Activated CD4-positive, alpha-beta T cell treated with anti-CD3 and anti-CD28 coated beads, Interleukin-2, amount 10 ng/mL, durations not matched to agents 7 days and 5 days (primary cell): ENCODE measurements at regions of chr22 and their contacts with region 1.

Region 1: GRCh38 chr22:39932918-39933649 is 27.1 kb upstream of the TMA7B start:
- DNase-seq: peak; percentile 62
- H3K4me3 Mint-ChIP-seq: peak overlapping the region; percentile 67
- H3K27ac Mint-ChIP-seq: peak overlapping the region; percentile 83
- H3K4me1 Mint-ChIP-seq: peaks cover 55% of the 10 kb centered on the region
- H3K27me3 Mint-ChIP-seq: no peaks in the 10 kb centered on the region

Region 2: GRCh38 chr22:39917776-39918495 is 15.1 kb before region 1 on chr22:
- CTCF ChIA-PET with region 1: interaction called, 64 read pairs
- POLR2A ChIA-PET with region 1: no interaction called
- DNase-seq: no peak
- H3K4me3 Mint-ChIP-seq: peak overlapping the region; percentile 60
- H3K27ac Mint-ChIP-seq: peak overlapping the region; percentile 83
- H3K4me1 Mint-ChIP-seq: peaks cover 93% of the 10 kb centered on the region
- H3K27me3 Mint-ChIP-seq: no peaks in the 10 kb centered on the region

Region 3: DNA sequence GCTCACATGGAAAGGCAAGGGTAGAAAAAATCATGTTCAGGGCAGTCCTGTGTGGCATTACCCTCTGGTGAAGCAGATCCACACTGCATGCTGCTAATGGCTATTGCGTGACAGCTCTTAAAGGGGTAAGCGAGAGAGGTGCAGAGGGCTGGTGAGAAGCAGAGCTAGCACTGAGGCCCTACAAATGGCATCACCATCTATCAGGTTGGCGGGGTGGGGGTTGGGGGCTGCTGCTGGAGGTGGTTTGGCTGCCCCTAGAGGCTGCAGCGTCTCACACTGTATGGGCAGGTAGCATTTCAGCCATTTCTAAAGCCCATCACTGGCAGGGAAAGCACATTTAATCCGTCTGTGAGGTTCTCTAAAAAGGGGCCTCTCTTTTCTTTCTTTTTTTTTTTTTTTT is 10.3 kb after region 1 on chr22:
- CTCF ChIA-PET with region 1: interaction called, 15 read pairs
- POLR2A ChIA-PET with region 1: interaction called, 3 read pairs
- DNase-seq: no peak
- H3K4me3 Mint-ChIP-seq: peak overlapping the region; percentile 22
- H3K27ac Mint-ChIP-seq: peak overlapping the region; percentile 85
- H3K4me1 Mint-ChIP-seq: peaks cover 91% of the 10 kb centered on the region
- H3K27me3 Mint-ChIP-seq: no peaks in the 10 kb centered on the region

Region 4: GRCh38 chr22:40449676-40450035 is 516.6 kb after region 1 on chr22:
- CTCF ChIA-PET with region 1: no interaction called
- POLR2A ChIA-PET with region 1: no interaction called
- DNase-seq: no peak
- H3K4me3 Mint-ChIP-seq: no peak overlapping the region
- H3K27ac Mint-ChIP-seq: peak overlapping the region; percentile 62
- H3K4me1 Mint-ChIP-seq: peaks cover 59% of the 10 kb centered on the region
- H3K27me3 Mint-ChIP-seq: no peaks in the 10 kb centered on the region